CD4-positive, alpha-beta T cell (primary cell): ENCODE measurements at regions of chr17 and their contacts with region 1.

Region 1: DNA sequence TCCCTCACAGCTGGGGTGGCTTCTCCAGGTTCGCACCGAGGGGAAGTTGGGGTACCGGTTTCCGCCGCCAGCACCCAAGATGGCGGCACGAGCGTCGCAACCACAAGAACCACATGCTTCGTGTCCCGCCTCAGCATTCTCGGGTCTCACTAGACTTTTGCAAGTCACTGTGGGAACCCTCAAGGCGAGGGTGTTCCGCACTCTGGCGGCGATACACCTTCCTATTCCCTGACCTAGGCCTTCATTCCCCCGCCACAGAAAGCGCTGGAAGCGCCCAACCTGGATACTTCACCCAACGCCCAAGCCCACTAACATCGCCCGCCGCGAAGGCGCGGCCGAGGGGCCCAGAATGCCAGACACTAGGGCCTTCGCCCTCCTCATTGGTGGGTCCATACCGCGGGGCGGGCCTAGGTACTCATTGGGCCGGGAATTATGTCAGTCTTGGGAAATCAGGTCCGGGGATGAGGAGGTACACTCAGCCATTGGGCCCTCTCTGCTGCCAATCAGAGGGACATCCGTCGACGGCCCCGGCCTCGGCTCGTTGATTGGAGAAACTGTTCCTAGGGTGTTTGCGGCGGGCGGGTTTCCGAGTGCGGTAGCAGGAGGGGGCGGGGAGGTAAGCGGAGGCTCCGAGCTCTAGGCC is at the start of gene NFE2L1:
- DNase-seq: peak; percentile 92 to 100 (median 96)
- ATAC-seq: peak; percentile 96
- H3K4me3 ChIP-seq: peak within 1 kb of the TSS; percentile 81
- H3K4me3 Mint-ChIP-seq: peak within 1 kb of the TSS; percentile 93
- H3K27ac ChIP-seq: peak within 1 kb of the TSS; percentile 82 to 91
- H3K27ac Mint-ChIP-seq: peak within 1 kb of the TSS; percentile 94
- H3K4me1 ChIP-seq: peaks cover 55% of the 10 kb centered on the region
- H3K4me1 Mint-ChIP-seq: peaks cover 58% of the 10 kb centered on the region
- H3K27me3 ChIP-seq: no peaks in the 10 kb centered on the region
- H3K27me3 Mint-ChIP-seq: no peaks in the 10 kb centered on the region
- CTCF ChIP-seq: no peak
- total RNA-seq, gene NFE2L1: 28.1 to 30.6 TPM

Region 2: DNA sequence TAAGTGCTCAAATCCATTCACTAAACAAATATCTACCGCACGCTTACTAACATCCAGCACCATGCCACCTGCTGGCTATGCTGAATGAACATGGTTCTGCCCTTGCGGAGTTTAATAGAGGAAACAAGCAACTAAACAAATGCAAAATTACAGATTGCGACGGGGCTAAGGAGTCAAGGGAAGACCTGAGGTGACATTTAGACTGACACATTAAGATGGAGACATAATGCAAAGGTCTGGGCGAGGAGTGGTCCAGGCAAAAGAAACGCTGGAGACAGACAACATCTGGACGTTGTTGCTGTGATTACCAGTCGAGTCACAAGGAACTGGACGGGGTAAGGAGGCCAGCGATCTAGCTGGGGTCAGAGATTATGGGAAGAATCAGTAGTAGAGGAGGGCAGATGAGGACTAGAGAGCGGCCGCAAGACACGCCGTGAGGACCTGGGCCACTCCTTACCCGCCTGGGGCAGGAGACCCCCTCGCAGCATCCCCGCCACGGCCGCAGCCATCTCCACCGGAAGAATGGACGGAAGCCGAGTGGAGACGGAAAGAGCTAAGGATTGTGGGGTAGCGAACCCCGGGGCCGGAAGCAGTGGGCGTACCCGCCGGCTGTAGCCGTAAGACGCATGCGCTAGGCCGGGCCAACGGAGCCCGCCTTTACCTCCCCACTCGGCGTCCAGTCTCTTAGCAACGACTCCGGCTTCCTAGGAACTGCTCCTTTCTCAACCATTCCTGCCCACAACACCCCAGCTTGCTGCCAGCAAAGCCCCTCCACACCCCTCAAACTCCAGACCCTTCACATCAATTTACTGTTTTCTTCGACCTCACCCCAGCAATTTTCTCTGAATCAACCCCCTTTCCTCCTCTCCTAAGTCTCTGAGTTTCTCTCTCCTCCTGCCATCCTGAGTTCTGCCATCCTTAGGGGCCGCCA is 216.6 kb before region 1 on chr17 and contains the starts of genes LRRC46 and MRPL10:
- CTCF ChIA-PET with region 1: no interaction called
- POLR2A ChIA-PET with region 1: no interaction called
- intact Hi-C with region 1: loop called in 1 of 2 experiments (anchors 1 kb)
- DNase-seq: peak; percentile 84 to 95 (median 88)
- ATAC-seq: peak; percentile 86
- H3K4me3 ChIP-seq: peak within 1 kb of the TSS; percentile 92
- H3K4me3 Mint-ChIP-seq: peak within 1 kb of the TSS; percentile 89
- H3K27ac ChIP-seq: peak within 1 kb of the TSS; percentile 78 to 90
- H3K27ac Mint-ChIP-seq: peak within 1 kb of the TSS; percentile 78
- H3K4me1 ChIP-seq: peaks cover 66% of the 10 kb centered on the region
- H3K4me1 Mint-ChIP-seq: peaks cover 58% of the 10 kb centered on the region
- H3K27me3 ChIP-seq: no peaks in the 10 kb centered on the region
- H3K27me3 Mint-ChIP-seq: no peaks in the 10 kb centered on the region
- CTCF ChIP-seq: no peak
- total RNA-seq, gene LRRC46: 0.42 to 0.85 TPM
- total RNA-seq, gene MRPL10: 49.0 to 51.4 TPM

Region 3: DNA sequence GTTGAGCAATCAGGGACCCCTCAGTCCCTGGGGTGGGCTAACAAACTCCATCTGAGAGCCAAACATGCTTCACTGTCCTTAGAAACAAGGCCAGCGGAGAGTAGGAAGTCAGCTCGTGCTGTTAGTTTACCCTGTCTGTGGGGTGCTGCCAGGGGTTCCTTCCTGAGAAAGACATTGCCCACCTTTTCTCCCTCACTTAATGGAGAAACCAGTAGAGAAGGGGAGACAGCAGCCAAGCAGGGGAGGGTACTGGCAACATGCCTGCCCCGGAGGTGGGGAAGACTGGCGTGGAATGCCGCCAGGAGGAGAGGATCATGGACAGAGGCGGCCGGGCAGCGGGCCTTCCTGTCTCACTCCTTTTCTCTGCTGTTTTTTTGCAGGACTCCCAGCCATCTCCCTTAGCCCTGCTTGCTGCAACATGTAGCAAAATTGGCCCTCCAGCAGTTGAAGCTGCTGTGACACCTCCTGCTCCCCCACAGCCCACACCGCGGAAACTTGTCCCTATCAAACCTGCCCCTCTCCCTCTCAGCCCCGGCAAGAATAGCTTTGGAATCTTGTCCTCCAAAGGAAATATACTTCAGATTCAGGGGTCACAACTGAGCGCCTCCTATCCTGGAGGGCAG is 132.0 kb before region 1 on chr17:
- CTCF ChIA-PET with region 1: no interaction called
- POLR2A ChIA-PET with region 1: no interaction called
- intact Hi-C with region 1: no loop called
- DNase-seq: no peak
- ATAC-seq: no peak
- H3K4me3 ChIP-seq: no peak overlapping the region
- H3K4me3 Mint-ChIP-seq: no peak overlapping the region
- H3K27ac ChIP-seq: no peak overlapping the region
- H3K27ac Mint-ChIP-seq: no peak overlapping the region
- H3K4me1 ChIP-seq: no peaks in the 10 kb centered on the region
- H3K4me1 Mint-ChIP-seq: peaks cover 31% of the 10 kb centered on the region
- H3K27me3 ChIP-seq: no peaks in the 10 kb centered on the region
- H3K27me3 Mint-ChIP-seq: no peaks in the 10 kb centered on the region
- CTCF ChIP-seq: no peak

Region 4: DNA sequence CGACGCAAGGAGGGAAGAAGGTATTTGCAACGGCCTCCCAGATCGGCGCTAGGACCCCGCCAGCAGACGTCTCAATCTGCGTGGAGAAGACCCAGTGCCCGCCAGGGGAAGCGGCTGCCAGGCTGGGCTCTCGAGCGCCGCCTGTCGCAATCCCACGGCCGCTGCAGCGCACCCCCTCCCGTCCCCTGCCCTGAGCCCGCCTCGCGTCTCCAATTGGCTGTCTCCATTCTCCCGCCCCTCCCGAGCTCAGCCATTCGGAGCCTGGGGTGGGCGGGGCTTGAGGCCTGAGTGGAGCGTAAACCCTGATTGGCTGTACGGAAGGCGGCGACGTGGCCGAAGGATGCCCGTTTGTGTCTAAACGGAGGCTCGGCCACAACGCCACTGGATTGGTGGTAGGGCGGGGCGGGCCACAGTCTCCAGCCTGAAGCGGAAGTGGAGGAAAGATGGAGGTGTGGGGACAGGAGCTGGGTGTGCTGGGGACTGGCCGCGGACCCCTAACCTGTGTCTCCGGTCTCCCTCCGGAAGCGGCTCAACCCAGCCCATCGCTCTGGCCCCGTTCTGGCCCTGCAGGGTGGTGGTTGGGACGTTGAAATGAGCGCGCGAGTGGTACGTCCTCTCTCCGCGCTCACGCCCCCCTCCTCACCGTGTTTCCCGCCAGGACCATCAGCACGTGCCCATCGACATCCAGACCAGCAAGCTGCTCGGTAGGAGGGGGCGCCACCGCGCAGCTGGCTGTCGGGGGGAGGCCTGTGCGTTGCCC is 77.0 kb before region 1 on chr17 and contains the start of gene CDK5RAP3:
- CTCF ChIA-PET with region 1: interaction called, 4 read pairs
- POLR2A ChIA-PET with region 1: interaction called, 9 read pairs
- intact Hi-C with region 1: loop called in 1 of 2 experiments (anchors 2 kb)
- DNase-seq: peak; percentile 95 to 99 (median 98)
- ATAC-seq: peak; percentile 98
- H3K4me3 ChIP-seq: peak within 1 kb of the TSS; percentile 99
- H3K4me3 Mint-ChIP-seq: peak within 1 kb of the TSS; percentile 99
- H3K27ac ChIP-seq: peak within 1 kb of the TSS; percentile 32 to 72
- H3K27ac Mint-ChIP-seq: peak within 1 kb of the TSS; percentile 86
- H3K4me1 ChIP-seq: peaks cover 26% of the 10 kb centered on the region
- H3K4me1 Mint-ChIP-seq: peaks cover 26% of the 10 kb centered on the region
- H3K27me3 ChIP-seq: no peaks in the 10 kb centered on the region
- H3K27me3 Mint-ChIP-seq: no peaks in the 10 kb centered on the region
- CTCF ChIP-seq: peak; percentile 92
- total RNA-seq, gene CDK5RAP3: 206 to 224 TPM

Region 5: DNA sequence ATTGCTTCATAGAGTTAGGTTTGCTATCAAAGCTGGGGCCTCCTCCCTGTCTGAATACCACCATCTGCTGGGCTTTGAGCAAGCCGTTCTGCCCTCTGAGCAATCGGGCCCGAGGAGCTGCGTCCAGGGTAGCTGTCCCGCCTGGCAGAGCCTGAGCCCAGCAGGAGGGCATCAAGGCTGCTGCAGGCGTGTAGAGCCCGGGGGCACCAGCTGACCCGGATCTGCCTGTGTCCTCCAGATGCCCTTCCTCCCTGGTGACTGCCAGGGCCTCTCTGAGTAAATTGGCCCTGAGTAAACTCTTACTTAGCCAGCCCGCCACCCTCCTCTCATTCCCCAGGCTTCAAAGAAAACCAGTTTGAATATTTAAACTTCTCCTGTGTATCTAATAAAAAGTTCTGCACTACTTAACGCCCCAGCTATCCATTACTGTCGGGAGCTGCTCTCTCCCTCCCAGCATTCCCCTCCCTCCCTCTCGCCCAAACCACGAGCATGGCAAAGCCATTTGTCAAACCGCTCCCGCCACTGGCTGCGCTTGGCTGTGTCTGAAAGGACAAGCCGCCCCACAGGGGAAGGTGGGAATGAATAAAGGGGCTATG is 60.5 kb before region 1 on chr17:
- CTCF ChIA-PET with region 1: no interaction called
- POLR2A ChIA-PET with region 1: no interaction called
- intact Hi-C with region 1: no loop called
- DNase-seq: no peak
- ATAC-seq: no peak
- H3K4me3 ChIP-seq: no peak overlapping the region
- H3K4me3 Mint-ChIP-seq: no peak overlapping the region
- H3K27ac ChIP-seq: no peak overlapping the region
- H3K27ac Mint-ChIP-seq: no peak overlapping the region
- H3K4me1 ChIP-seq: peaks cover 6% of the 10 kb centered on the region
- H3K4me1 Mint-ChIP-seq: no peaks in the 10 kb centered on the region
- H3K27me3 ChIP-seq: no peaks in the 10 kb centered on the region
- H3K27me3 Mint-ChIP-seq: no peaks in the 10 kb centered on the region
- CTCF ChIP-seq: no peak

Region 6: DNA sequence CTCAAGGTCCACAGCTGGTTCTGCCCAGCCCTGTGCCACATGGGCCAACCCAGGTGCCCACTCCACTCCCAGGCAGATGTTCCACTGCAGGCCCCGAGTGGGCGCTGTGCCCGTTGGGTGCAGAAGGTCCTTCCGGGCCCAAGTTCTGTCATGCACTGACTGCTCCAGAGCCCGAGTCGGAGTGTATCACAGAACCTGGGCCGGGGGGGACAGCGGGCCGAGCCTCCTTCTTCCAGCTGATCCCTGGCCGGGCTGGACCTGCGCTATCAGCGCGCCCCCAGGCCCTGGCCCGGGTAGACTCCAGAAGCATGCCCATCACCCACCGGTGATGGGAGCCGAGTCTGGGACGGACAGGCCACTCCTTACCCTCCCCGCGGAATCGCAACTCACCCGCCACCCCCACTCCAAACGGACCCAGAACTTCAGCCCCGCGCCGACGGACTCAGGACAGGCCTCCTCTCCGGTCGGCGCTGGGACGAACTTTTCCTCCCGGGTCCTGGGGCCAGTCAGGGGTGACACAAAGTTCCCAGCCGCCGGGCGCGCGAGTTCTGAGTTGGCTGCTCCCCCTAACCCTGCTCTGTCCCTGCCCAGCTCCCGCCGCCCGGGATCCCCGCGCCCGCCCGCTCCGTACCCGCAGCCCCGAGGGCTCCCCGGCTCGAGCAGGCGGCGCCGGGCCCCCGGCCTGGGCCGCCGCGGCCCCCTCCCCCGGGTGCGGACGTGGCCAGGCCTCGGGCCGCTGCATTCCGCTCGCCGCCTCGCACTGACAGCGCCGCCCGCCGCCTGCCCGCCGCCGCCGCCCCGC is 10.6 kb before region 1 on chr17 and contains the start of gene COPZ2:
- CTCF ChIA-PET with region 1: interaction called, 23 read pairs
- POLR2A ChIA-PET with region 1: interaction called, 7 read pairs
- intact Hi-C with region 1: no loop called
- DNase-seq: peak; percentile 46 to 84 (median 61)
- ATAC-seq: peak; percentile 100
- H3K4me3 ChIP-seq: peak within 1 kb of the TSS; percentile 76
- H3K4me3 Mint-ChIP-seq: peak within 1 kb of the TSS; percentile 97
- H3K27ac ChIP-seq: no peak within 1 kb of the TSS
- H3K27ac Mint-ChIP-seq: no peak within 1 kb of the TSS
- H3K4me1 ChIP-seq: peaks cover 15% of the 10 kb centered on the region
- H3K4me1 Mint-ChIP-seq: peaks cover 9% of the 10 kb centered on the region
- H3K27me3 ChIP-seq: peaks cover 17 to 26% of the 10 kb centered on the region in 2 experiments
- H3K27me3 Mint-ChIP-seq: peaks cover 56% of the 10 kb centered on the region
- CTCF ChIP-seq: peak; percentile 72
- total RNA-seq, gene COPZ2: 0.47 to 0.88 TPM

Region 7: DNA sequence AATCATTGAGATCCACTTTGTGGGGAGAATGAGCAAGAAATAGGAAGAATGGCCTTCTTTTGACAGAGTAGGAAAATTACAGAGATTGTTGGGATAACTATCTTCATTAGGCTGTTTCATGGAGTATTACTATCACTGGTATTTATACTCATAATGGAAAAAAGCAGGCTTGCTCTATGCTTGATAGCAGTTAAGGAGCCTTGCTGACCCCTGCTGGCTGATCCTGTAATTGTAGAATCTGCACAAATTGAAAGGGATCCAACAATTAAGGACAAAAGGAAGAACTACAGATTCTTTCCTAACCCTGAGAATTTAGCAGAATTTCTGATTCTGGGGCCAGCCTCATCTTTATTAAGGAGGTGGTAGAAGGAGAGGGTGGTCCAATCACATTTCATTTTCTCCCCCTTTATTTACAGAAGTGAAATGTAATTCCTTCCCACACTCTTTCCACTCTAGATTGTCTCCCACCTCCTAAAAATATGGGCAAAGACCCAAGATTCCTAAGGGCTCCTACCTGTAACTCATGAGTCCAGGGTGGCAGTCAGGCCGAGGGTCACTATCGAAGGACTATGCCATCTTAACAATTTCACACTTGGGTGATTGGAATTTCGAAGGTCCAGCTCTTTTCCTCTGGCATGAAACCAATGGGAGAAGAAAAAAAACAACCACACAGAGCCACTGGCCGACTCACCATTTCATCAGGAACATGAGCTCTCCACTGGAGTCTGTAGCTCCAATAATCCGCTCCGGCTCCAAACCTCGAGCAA is 26.6 kb after region 1 on chr17:
- CTCF ChIA-PET with region 1: interaction called, 6 read pairs
- POLR2A ChIA-PET with region 1: interaction called, 3 read pairs
- intact Hi-C with region 1: loop called in 1 of 2 experiments (anchors 2 kb)
- DNase-seq: peak; percentile 55 to 84 (median 70)
- ATAC-seq: peak; percentile 86
- H3K4me3 ChIP-seq: no peak overlapping the region
- H3K4me3 Mint-ChIP-seq: no peak overlapping the region
- H3K27ac ChIP-seq: no peak overlapping the region
- H3K27ac Mint-ChIP-seq: no peak overlapping the region
- H3K4me1 ChIP-seq: no peaks in the 10 kb centered on the region
- H3K4me1 Mint-ChIP-seq: no peaks in the 10 kb centered on the region
- H3K27me3 ChIP-seq: no peaks in the 10 kb centered on the region
- H3K27me3 Mint-ChIP-seq: no peaks in the 10 kb centered on the region
- CTCF ChIP-seq: peak; percentile 85

Region 8: GRCh38 chr17:48107168-48108132 is 59.6 kb after region 1 on chr17 and contains the start of gene SNX11:
- CTCF ChIA-PET with region 1: no interaction called
- POLR2A ChIA-PET with region 1: interaction called, 14 read pairs
- intact Hi-C with region 1: loop called (anchors 2 kb)
- DNase-seq: peak; percentile 86 to 97 (median 94)
- ATAC-seq: peak; percentile 93
- H3K4me3 ChIP-seq: peak within 1 kb of the TSS; percentile 92
- H3K4me3 Mint-ChIP-seq: peak within 1 kb of the TSS; percentile 97
- H3K27ac ChIP-seq: peak within 1 kb of the TSS; percentile 84 to 93
- H3K27ac Mint-ChIP-seq: peak within 1 kb of the TSS; percentile 88
- H3K4me1 ChIP-seq: peaks cover 40% of the 10 kb centered on the region
- H3K4me1 Mint-ChIP-seq: peaks cover 63% of the 10 kb centered on the region
- H3K27me3 ChIP-seq: no peaks in the 10 kb centered on the region
- H3K27me3 Mint-ChIP-seq: no peaks in the 10 kb centered on the region
- CTCF ChIP-seq: no peak
- total RNA-seq, gene SNX11: 6.8 to 8.7 TPM

Region 9: DNA sequence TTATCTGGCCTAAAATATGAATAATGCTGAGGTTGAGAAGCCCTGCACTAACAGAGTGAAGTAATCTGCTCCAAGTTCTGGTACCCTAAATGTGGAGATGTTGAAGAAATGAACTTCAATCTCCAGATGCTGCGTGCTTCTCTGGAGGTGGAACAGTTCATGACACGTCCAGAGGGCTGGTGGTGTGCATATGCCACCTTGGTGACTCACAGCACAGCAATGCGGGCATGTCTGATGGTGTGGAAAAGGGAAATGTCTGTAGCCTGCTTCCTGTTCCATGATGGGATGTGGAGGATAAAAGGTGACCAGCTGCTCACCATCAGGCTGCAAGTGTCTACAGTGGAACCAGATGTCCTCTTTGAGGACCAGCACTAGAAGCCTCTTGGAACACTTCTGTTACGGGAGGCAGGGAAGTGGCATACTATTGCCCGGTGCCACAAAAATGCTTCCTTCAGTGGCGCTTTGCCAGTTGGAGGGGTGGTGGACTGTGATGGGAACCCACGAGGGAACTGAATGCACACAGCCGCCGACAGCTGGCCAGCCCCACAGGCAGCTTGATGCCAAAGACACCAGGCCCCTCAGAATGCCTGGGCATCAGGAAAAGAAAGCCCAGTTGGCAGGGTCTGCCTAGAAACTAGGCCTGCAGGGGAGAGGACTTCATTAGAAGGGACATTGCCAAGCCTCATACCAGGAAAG is 79.6 kb after region 1 on chr17:
- CTCF ChIA-PET with region 1: no interaction called
- POLR2A ChIA-PET with region 1: no interaction called
- intact Hi-C with region 1: no loop called
- DNase-seq: no peak
- ATAC-seq: no peak
- H3K4me3 ChIP-seq: no peak overlapping the region
- H3K4me3 Mint-ChIP-seq: no peak overlapping the region
- H3K27ac ChIP-seq: no peak overlapping the region
- H3K27ac Mint-ChIP-seq: peak overlapping the region; percentile 17
- H3K4me1 ChIP-seq: no peaks in the 10 kb centered on the region
- H3K4me1 Mint-ChIP-seq: no peaks in the 10 kb centered on the region
- H3K27me3 ChIP-seq: no peaks in the 10 kb centered on the region
- H3K27me3 Mint-ChIP-seq: no peaks in the 10 kb centered on the region
- CTCF ChIP-seq: no peak